ENCODE measurements at regions of chr11 and their contacts with region 1.

Region 1: DNA sequence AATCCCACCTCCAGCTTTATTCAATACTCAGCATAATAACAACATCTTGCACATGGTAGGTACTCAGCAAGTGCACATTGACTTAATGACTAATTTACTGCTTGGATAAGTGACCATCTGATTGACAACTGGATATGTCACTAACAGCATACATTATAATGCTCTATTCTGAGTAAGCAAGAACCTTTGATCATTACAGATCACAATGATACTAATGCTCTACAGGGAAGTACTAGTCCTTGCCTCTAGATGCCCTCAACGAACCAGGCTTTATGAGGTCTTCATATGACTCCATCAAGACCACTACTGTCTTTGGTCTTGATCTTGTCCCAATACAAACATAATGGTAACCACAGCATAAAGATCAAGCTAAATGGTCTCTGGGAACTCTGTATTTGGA is 167.6 kb upstream of the MTMR2 start:
- DNase-seq: peak; percentile 20
- ATAC-seq: peak; percentile 71
- H3K4me3 ChIP-seq: no peak overlapping the region
- H3K27ac ChIP-seq: no peak overlapping the region
- H3K4me1 ChIP-seq: no peaks in the 10 kb centered on the region
- H3K27me3 ChIP-seq: no peaks in the 10 kb centered on the region
- CTCF ChIP-seq: peak; percentile 39

Region 2: GRCh38 chr11:96062134-96062533 is 29.3 kb before region 1 on chr11:
- CTCF ChIA-PET with region 1: no interaction called
- POLR2A ChIA-PET with region 1: no interaction called
- in situ Hi-C with region 1: no loop called
- intact Hi-C with region 1: no loop called
- DNase-seq: no peak
- ATAC-seq: no peak
- H3K4me3 ChIP-seq: no peak overlapping the region
- H3K27ac ChIP-seq: no peak overlapping the region
- H3K4me1 ChIP-seq: no peaks in the 10 kb centered on the region
- H3K27me3 ChIP-seq: no peaks in the 10 kb centered on the region
- CTCF ChIP-seq: no peak

Region 3: GRCh38 chr11:96125400-96125799 is 33.9 kb after region 1 on chr11:
- CTCF ChIA-PET with region 1: no interaction called
- POLR2A ChIA-PET with region 1: no interaction called
- in situ Hi-C with region 1: no loop called
- intact Hi-C with region 1: loop called (anchors 1 kb)
- DNase-seq: no peak
- ATAC-seq: no peak
- H3K4me3 ChIP-seq: no peak overlapping the region
- H3K27ac ChIP-seq: no peak overlapping the region
- H3K4me1 ChIP-seq: no peaks in the 10 kb centered on the region
- H3K27me3 ChIP-seq: no peaks in the 10 kb centered on the region
- CTCF ChIP-seq: no peak